Left cardiac atrium (tissue), 4 donors: ENCODE measurements at regions of chr9 and their contacts with region 1.

Region 1: DNA sequence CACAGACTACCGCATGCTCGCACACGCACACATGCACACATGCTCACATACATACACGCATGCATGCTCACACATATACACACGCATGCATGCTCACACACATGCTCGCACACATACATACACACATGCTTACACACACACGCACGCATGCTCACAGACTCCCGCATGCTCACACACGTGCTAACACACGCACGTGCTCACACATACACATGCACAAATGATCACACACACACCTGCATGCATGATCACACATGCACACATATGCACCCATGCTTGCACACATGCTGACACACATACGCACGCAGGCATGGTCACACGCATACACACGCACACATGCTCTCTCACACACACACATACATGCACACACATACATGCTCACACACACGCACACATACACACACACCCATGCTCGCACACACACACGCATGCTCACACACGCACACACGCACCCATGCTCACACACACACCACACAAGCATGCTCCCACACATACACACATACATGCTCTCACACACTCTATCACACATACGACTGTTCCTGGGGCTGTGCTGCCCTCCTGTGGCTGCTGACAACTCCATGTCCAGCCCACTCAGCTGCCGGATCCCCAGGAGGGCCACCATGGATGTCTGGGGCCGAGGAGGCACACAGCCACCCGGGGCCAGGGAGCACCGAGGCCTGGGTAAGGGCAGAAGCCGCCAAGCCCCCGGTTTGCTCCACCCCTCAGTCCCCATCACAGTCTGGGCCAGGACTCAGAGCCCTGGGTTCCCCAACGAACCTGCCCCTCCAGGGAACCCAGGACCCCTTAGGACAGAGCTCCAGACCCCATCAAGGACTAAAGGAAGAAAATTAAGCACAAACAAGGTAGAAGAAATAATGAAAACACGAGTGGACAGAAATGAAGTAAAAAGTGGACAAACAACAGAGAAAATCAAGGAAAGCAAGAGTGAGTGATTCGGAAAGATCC is 31.4 kb upstream of the EGFL7 start:
- DNase-seq: peak; percentile 88
- ATAC-seq: peak; percentile 92 to 93

Region 2: GRCh38 chr9:136326061-136326760 is 305.1 kb before region 1 on chr9:
- intact Hi-C with region 1: no loop called
- DNase-seq: no peak
- ATAC-seq: peak; percentile 3 to 9

Region 3: DNA sequence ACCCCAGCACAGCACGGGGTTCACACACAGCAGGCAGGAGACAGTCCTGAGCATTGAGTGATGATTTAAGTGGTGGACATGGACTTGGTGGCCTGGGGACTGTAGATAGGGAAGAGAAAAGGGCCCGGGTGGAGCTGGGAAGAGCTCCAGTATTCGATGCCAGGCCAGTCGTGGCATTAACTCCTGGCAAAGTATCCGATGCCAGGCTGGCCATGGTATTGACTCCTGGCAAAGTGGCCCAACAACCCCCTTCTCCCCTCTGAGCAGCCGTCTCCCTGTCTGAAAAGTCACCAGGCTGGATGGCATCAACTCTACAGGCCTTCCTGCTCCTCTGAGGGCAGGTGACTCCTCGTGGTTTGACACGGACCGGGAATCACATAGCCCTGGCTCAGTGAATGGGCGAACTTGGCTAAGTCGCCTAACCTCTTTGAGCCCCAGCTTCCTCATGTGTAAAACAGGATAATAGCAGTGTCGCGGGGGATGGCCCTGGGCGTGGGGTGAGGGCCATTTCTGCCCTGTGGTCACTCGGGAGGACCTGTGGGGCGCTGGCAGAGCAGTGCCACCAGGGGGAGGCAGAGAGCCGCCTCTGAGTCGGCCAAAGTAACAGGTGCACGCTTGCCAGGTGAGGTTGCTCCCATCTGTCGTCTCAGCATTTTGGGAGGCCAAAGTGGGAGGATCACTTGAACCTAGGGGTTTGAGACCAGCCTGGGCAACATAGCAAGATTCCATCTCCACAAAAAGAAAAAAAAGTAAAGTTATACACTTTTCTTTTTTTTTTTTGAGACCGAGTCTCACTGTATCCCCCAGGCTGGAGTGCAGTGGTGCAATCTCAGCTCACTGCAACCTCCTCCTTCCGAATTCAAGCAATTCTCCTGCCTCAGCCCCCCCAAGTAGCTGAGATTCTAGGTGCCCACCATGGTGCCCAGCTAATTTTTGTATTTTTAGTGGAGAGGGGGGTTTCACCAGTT is 142.8 kb before region 1 on chr9:
- intact Hi-C with region 1: loop called in 1 of 2 experiments (anchors 2 kb)
- DNase-seq: peak; percentile 71
- ATAC-seq: peak; percentile 17 to 20

Region 4: DNA sequence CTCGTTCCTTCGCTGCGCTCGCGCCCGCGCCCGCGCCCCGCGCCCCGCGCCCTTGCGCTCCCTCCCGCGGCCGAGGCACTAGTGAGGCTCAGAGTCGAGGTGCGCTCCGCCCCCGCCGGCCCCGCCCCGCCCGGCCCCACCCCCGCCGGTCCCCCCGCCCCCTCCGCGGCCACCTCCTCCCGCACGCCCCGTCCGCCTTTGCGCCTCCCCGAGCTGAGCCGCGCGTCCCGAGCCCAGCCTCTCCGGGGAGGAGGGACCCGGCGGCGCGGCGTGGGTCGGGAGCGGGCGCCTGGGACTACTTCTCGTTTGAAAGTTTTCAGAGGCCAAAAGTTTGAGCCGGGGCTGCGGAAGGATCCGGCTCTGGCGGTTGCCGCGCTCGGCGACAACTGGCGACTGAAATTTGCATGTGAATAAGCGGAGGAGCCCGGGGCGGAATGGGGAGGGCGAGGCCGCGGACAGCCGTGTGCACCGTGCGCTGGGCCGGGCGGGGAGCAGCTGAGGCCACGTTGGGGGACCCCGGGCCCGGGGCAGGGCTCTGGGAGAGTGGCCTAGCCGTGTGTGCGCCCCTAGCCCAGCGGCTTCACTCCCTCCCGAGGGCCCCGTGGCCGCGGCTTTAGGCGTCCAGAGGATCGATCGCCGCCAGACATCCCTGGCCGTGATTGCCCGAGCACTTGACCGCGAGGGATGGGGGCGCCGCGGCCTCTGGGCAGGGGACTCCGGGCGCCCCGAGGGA is 85.2 kb before region 1 on chr9 and contains the start of gene NOTCH1:
- intact Hi-C with region 1: loop called in 1 of 2 experiments (anchors 10 kb)
- DNase-seq: peak; percentile 95
- ATAC-seq: peak; percentile 81 to 84
- total RNA-seq, gene NOTCH1: 22.7 to 36.0 TPM

Region 5: DNA sequence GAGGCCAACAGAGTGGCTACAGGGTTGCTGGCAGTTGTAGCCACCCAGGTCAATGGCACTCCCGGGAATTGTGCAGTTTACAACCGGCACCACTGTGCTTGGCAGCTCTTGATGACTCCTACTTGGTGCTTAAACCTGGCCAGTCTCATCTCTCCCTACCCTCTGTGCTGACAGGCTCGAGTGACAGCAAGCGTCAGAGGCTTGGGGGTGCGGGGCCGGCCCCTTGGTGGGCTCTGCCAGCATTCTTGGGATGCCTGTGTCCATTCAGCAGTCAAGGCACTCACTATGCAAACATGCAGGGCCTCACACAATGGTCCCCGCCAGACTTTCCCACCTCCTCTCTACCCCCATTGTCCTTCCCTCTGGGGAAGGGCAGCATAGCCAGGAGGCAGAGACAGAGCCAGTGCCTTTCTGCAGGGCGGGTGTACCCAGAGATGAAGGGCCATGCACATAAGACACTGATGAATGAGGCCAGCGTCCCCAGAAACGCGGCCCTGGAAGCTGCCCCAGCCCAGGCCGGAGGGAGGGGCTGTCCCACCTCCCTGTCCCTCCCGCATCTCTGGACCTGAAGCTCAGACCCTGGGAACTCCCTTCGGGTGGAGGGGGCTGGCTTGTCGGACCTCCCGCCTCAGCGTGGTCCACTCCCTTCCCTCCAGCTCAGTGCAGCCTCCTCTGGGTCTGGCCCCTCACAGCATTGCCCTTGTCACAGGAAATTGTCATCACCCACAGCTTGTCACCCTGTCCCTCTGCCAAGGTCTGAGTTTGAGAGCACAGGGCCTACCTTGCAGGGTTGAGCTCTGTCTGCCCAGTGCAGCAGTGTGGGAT is 59.1 kb before region 1 on chr9:
- intact Hi-C with region 1: loop called in 1 of 2 experiments (anchors 10 kb)
- DNase-seq: peak; percentile 73
- ATAC-seq: peak; percentile 70 to 73

Region 6: GRCh38 chr9:136799854-136800657 is 168.7 kb after region 1 on chr9:
- intact Hi-C with region 1: no loop called
- DNase-seq: peak; percentile 86
- ATAC-seq: peak; percentile 83 to 88

Region 7: GRCh38 chr9:136885950-136886578 is 254.7 kb after region 1 on chr9 and contains the start of gene TRAF2:
- intact Hi-C with region 1: no loop called
- DNase-seq: peak; percentile 98
- ATAC-seq: peak; percentile 99
- total RNA-seq, gene TRAF2: 8.8 to 11.8 TPM